ENCODE measurements at regions of chr18 and their contacts with region 1.

Region 1: DNA sequence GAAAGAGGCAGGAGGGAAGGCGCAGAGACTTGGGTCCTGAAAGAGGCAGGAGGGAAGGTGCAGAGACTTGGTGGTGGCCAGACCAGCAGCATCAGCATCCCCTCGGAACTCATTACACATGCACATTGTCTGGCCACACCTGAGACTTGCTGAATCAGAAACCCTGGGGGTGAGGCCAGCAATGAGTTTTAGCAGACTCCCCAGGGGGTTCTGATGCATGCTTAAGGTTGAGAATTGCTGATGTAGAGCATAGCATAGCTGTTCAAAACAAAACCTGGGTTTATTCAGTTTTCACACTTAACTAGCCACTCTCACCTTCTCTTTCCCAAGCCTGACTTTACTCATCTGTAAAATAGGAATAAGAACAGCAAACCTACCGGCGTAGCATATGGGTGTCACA is 122.9 kb downstream of the MRO start:
- DNase-seq: no peak
- ATAC-seq: no peak
- H3K4me3 ChIP-seq: no peak overlapping the region
- H3K27ac ChIP-seq: no peak overlapping the region
- H3K4me1 ChIP-seq: no peaks in the 10 kb centered on the region
- H3K27me3 ChIP-seq: no peaks in the 10 kb centered on the region

Region 2: GRCh38 chr18:49728542-49728941 is 968.4 kb before region 1 on chr18:
- intact Hi-C with region 1: loop called in 1 of 2 experiments (anchors 10 kb)
- DNase-seq: no peak
- ATAC-seq: no peak
- H3K4me3 ChIP-seq: no peak overlapping the region
- H3K27ac ChIP-seq: no peak overlapping the region
- H3K4me1 ChIP-seq: no peaks in the 10 kb centered on the region
- H3K27me3 ChIP-seq: no peaks in the 10 kb centered on the region